Tibial artery (tissue), 4 donors: ENCODE measurements at regions of chr2 and their contacts with region 1.

Region 1: DNA sequence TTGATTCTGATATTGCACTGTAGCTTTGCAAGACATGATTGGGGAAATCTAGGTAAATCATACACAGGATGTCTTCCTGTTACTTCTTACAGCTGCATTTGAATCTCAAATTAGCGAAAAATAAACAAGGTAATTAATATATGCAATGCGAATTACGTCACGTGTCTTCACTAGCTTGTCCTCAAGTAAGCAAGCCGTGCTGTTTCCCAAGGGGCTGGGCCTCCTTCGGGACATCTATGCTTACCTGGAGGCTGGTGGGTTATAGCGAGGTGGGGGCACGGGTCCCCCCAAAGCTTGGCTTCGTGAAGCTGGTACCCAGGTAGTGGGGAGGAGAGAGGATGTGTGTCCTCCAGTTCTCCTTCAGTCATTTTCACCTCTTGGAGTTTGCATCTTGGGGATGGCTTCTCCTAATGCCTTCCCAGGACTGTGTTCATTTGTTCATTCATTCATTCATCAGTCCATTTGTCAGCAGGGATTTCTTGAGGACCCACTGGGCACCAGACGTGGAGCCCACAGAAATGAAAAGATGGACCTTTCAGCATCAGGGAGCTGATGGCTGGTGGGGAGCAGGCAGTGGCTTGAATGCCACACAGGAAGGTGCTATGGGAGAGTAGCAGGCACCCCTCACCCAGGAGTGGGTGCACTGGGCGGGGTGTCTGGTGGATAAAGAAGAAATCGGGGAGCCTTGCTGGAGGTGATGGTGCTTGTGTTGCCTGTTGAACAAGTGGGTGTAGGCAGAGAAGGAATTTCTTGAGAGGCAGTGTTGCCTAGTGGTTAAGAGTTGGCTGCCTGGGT is 155.1 kb downstream of the GLI2 start:
- DNase-seq: no peak
- H3K4me3 ChIP-seq: no peak overlapping the region
- H3K27ac ChIP-seq: no peak overlapping the region
- H3K4me1 ChIP-seq: peaks cover 0 to 20% (median 15%) of the 10 kb centered on the region in 4 donors
- H3K27me3 ChIP-seq: no peaks in the 10 kb centered on the region
- CTCF ChIP-seq: no peak

Region 2: DNA sequence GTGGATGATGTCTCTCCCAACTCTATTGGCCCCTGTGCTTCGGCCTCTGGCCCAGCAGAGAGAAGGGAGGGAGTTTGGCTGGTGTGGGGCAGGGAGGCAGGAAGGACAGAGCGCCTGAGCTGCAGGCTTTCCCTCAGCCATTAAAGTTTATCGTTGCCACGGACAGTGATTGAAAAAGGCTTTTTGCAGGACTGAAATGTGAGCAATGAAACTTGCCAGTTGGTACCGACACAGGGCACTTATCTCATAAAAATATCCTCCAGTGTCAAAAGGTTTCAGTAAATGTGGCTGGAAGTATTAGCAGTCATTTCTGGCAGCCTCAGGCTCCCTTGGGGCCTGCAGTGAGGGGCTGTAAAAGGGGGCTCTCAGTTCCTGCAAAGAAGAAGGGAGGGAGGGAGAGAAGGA is 14.1 kb after region 1 on chr2:
- intact Hi-C with region 1: loop called (anchors 2 kb)
- DNase-seq: peak in 1 of 2 donors; percentile 78
- H3K4me3 ChIP-seq: no peak overlapping the region
- H3K27ac ChIP-seq: peak overlapping the region; percentile 69 to 70
- H3K4me1 ChIP-seq: peaks cover 8 to 40% (median 22%) of the 10 kb centered on the region in 4 donors
- H3K27me3 ChIP-seq: no peaks in the 10 kb centered on the region
- CTCF ChIP-seq: no peak